T-cell (primary cell): ENCODE measurements at regions of chr14 and their contacts with region 1.

Region 1: DNA sequence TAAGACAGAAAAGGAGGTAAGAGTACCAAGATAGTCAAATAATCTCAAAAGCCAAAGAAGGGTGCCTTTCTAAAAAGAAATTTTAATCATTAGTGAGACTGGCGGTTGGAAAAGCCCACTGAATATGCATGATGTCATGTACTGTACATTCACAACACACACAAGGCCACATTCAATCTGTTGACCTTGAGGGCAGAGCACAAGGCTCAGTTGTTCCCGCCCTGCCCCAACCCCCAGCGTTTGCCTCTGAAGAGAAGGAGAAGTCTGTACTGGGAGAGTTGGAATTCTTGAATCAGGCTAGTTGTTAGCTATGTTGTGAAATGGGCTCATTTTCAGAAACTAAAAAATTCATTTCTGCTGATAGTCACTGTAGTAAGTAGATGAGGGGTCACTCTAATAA is 50.2 kb upstream of the NID2 start:
- DNase-seq: no peak
- ATAC-seq: no peak
- H3K4me3 ChIP-seq: no peak overlapping the region
- H3K4me3 Mint-ChIP-seq: no peak overlapping the region
- H3K27ac ChIP-seq: no peak overlapping the region
- H3K27ac Mint-ChIP-seq: no peak overlapping the region
- H3K4me1 ChIP-seq: no peaks in the 10 kb centered on the region
- H3K4me1 Mint-ChIP-seq: no peaks in the 10 kb centered on the region
- H3K27me3 ChIP-seq: no peaks in the 10 kb centered on the region
- H3K27me3 Mint-ChIP-seq: peaks cover 0 to 2% of the 10 kb centered on the region in 2 donors

Region 2: DNA sequence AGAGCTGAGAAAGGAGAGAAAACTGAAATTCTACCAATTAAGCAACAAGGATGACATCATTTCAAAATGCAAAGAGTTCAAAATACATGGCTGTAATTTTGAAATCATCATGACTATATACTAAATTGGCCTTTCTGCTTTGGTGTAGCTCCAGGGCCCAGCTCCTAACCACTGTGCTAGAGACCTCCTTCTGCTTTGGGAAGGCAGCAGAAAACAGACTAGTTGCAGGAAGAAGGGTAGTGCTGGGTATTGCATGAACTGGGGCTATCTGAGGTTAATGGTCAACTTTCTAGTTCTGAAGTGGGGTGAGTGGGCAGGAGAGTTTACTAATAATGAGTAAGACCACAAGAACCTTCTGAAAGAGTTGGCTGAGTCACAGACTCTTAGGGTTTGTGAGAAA is 261.3 kb after region 1 on chr14:
- CTCF ChIA-PET with region 1: interaction called in 1 of 2 experiments, 10 read pairs
- POLR2A ChIA-PET with region 1: no interaction called
- DNase-seq: no peak
- ATAC-seq: no peak
- H3K4me3 ChIP-seq: no peak overlapping the region
- H3K4me3 Mint-ChIP-seq: no peak overlapping the region
- H3K27ac ChIP-seq: no peak overlapping the region
- H3K27ac Mint-ChIP-seq: no peak overlapping the region
- H3K4me1 ChIP-seq: peaks cover 0 to 9% of the 10 kb centered on the region in 2 experiments
- H3K4me1 Mint-ChIP-seq: peaks cover 4 to 14% (median 8%) of the 10 kb centered on the region in 3 donors
- H3K27me3 ChIP-seq: no peaks in the 10 kb centered on the region
- H3K27me3 Mint-ChIP-seq: peaks cover 0 to 4% of the 10 kb centered on the region in 2 donors